Panc1 (cell line): ENCODE measurements at regions of chr7 and their contacts with region 1.

Region 1: GRCh38 chr7:65980576-65981250 is 1.3 kb downstream of the GUSB start:
- DNase-seq: no peak
- ATAC-seq: no peak; the same call in 1 of the 2 replicates
- H3K4me3 ChIP-seq: peak overlapping the region; percentile 73 to 82
- H3K27ac ChIP-seq: peak overlapping the region; percentile 18; the same call in 1 of the 2 replicates
- H3K4me1 ChIP-seq: peaks cover 10% of the 10 kb centered on the region
- H3K27me3 ChIP-seq: no peaks in the 10 kb centered on the region
- CTCF ChIP-seq: no peak

Region 2: DNA sequence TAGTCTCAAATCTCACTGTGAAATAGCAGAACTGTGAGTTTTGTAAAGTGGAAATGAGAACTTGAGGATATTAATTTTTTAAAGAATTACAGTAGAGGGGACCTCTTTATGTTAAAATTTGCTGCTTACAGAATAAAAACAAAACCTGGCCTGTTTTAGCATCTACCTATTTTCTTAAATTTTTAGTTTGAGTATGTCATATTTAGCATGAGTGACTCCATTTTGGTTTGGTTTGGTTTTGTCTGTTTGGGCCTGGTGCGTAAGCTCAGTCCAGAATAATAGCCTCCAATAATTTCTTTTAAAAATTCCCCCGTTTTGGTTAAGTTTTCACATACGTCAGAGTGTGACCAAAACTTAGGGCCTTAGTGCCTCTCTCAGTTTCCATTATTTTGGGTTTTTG is 759.0 kb before region 1 on chr7:
- CTCF ChIA-PET with region 1: no interaction called
- POLR2A ChIA-PET with region 1: interaction called, 13 read pairs
- in situ Hi-C with region 1: no loop called
- intact Hi-C with region 1: no loop called
- DNase-seq: no peak
- ATAC-seq: no peak
- H3K4me3 ChIP-seq: no peak overlapping the region
- H3K27ac ChIP-seq: no peak overlapping the region
- H3K4me1 ChIP-seq: no peaks in the 10 kb centered on the region
- H3K27me3 ChIP-seq: no peaks in the 10 kb centered on the region
- CTCF ChIP-seq: no peak

Region 3: GRCh38 chr7:65960351-65961074 is 20.2 kb before region 1 on chr7:
- CTCF ChIA-PET with region 1: no interaction called
- POLR2A ChIA-PET with region 1: no interaction called
- in situ Hi-C with region 1: no loop called
- intact Hi-C with region 1: no loop called
- DNase-seq: no peak
- ATAC-seq: peak; percentile 43; the same call in 1 of the 2 replicates
- H3K4me3 ChIP-seq: no peak overlapping the region
- H3K27ac ChIP-seq: no peak overlapping the region
- H3K4me1 ChIP-seq: no peaks in the 10 kb centered on the region
- H3K27me3 ChIP-seq: no peaks in the 10 kb centered on the region
- CTCF ChIP-seq: no peak

Region 4: GRCh38 chr7:66583490-66584110 is 602.9 kb after region 1 on chr7:
- CTCF ChIA-PET with region 1: no interaction called
- POLR2A ChIA-PET with region 1: interaction called, 11 read pairs
- in situ Hi-C with region 1: no loop called
- intact Hi-C with region 1: no loop called
- DNase-seq: no peak
- ATAC-seq: no peak
- H3K4me3 ChIP-seq: no peak overlapping the region
- H3K27ac ChIP-seq: no peak overlapping the region
- H3K4me1 ChIP-seq: peaks cover 2% of the 10 kb centered on the region; the same call in 1 of the 2 replicates
- H3K27me3 ChIP-seq: no peaks in the 10 kb centered on the region
- CTCF ChIP-seq: no peak